Activated T-helper 1 cell treated with anti-CD3 and anti-CD28 coated beads, Interleukin-12 subunit alpha, Interleukin-12 subunit beta, Interleukin-2, Interleukin-4 antibody, amounts not matched to agents 30 ng/mL and 10 ng/mL and 1 ng/mL, durations not matched to agents 14 hours and 24 hours and 36 hours (primary cell): ENCODE measurements at regions of chr4 and their contacts with region 1.

Region 1: DNA sequence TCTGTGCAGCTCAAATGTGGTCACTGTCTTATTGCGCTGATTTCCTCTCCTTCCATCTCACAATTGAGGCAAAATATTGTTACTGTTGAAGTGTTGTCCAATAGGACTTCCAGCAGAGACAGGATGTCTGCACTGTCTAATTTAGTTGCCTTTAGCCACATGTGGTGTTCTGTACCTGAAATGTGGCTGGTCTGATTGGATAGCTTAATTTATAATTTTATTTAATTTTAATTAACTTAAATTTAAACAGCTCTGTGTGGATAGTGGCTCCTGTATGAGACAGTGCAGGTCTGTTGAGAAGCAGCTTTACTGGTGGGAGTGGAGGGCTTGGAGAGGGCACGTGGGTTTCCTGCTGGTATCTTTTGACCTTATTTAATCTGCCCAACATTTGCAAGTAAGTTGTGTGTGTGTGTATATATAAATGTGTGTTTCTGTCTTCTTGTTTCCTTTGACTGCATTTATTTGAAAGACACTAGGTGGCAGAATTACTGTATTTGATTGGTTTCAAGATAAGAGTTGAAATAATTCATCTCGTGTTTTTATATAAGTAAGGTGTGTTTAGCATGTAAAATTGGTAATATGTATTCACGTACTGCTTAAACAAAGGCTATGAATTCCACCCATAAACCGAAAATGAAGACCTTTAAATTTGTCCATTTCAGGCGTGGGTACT is 55.3 kb upstream of the MSANTD1 start:
- DNase-seq: no peak
- H3K4me3 Mint-ChIP-seq: no peak overlapping the region
- H3K27ac Mint-ChIP-seq: no peak overlapping the region
- H3K4me1 Mint-ChIP-seq: peaks cover 59% of the 10 kb centered on the region
- H3K27me3 Mint-ChIP-seq: no peaks in the 10 kb centered on the region

Region 2: DNA sequence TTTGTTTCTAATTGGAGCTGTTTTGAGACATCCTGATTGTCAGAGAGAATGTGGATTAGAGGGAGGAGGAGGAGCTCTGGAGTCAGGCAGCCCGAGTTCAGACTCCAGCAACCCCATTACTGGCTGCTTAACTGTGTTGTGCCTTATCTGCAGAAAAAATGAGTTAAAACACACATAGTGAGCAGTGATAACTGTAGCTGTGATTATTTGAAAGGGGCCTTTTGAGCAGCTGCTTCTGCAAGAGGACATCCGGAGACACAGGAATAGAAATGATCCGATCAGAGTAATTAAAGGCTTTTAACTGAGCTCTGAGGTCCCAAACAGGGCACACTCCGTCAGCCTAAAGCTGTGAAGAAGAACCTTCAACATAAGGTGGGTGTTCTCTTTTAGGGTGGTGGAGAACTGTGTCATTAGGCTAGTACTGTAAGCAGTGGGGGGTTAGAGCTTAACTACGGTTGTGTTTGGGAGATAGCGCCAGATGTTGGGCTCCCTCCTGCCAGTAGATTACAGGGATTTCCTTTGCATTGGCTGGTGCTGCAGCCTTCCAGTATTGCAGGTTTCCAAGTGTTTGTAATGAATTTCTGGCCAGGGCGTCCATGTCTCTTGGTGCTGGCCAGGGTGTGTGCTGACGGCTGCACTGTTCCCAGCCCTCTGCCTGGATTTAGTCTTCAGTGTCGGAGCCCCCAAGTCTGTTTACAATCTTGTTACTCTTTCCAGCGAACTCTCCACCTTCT is 325.7 kb before region 1 on chr4:
- intact Hi-C with region 1: no loop called
- DNase-seq: no peak
- H3K4me3 Mint-ChIP-seq: no peak overlapping the region
- H3K27ac Mint-ChIP-seq: no peak overlapping the region
- H3K4me1 Mint-ChIP-seq: peaks cover 48% of the 10 kb centered on the region
- H3K27me3 Mint-ChIP-seq: no peaks in the 10 kb centered on the region

Region 3: GRCh38 chr4:3168029-3168428 is 25.6 kb before region 1 on chr4:
- intact Hi-C with region 1: no loop called
- DNase-seq: no peak
- H3K4me3 Mint-ChIP-seq: no peak overlapping the region
- H3K27ac Mint-ChIP-seq: peak overlapping the region; percentile 20
- H3K4me1 Mint-ChIP-seq: peaks cover 19% of the 10 kb centered on the region
- H3K27me3 Mint-ChIP-seq: no peaks in the 10 kb centered on the region

Region 4: GRCh38 chr4:3442959-3443749 is 249.5 kb after region 1 on chr4:
- intact Hi-C with region 1: loop called (anchors 1 kb)
- DNase-seq: peak; percentile 43
- H3K4me3 Mint-ChIP-seq: no peak overlapping the region
- H3K27ac Mint-ChIP-seq: no peak overlapping the region
- H3K4me1 Mint-ChIP-seq: no peaks in the 10 kb centered on the region
- H3K27me3 Mint-ChIP-seq: no peaks in the 10 kb centered on the region